ENCODE measurements at regions of chr5 and their contacts with region 1.

Region 1: DNA sequence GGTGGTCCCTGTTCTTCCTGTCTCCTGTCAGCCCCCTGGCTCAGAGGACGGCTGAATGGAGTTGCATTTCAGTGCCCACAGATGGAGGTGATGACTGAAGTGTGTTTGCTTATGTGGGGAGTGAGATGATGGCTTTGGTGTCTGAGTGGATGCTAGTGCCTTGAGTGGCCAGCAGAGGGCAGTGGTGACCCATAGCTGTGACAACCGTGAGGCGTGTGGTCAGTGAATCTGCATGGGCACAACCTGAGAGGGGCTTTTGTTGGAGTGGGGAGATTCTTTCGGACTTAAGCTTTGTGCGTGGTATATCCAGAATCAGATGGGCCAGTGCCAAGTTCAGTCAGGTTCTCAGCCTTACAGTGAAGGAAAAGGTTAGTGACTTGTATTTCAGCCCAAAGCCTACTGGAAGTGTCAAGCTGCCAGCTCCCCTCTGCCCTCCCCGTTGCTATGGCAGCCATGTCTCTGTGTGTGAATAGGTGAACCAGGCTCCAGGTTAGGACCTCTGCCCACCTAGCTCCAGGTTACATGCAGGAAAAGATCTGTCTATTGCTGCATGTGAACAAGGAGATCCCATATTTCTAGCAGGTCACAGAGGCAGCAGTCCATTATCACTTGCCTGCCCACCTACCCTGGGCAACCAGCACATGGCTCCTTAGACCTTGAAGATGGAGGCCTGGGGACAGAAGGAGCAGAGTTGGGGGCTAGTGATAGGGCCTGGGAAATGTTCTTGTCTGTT is 14.7 kb upstream of the CXXC5 start:
- DNase-seq: peak; percentile 87
- ATAC-seq: peak; percentile 14
- H3K4me3 ChIP-seq: no peak overlapping the region
- H3K4me3 Mint-ChIP-seq: peak overlapping the region; percentile 17
- H3K27ac ChIP-seq: peak overlapping the region; percentile 88 to 93
- H3K27ac Mint-ChIP-seq: peak overlapping the region; percentile 61
- H3K4me1 ChIP-seq: peaks cover 44 to 59% of the 10 kb centered on the region in 2 donors
- H3K4me1 Mint-ChIP-seq: peaks cover 54% of the 10 kb centered on the region
- H3K27me3 ChIP-seq: no peaks in the 10 kb centered on the region
- H3K27me3 Mint-ChIP-seq: no peaks in the 10 kb centered on the region
- CTCF ChIP-seq: peak; percentile 96

Region 2: GRCh38 chr5:139517683-139518564 is 115.5 kb before region 1 on chr5:
- CTCF ChIA-PET with region 1: interaction called, 5 read pairs
- POLR2A ChIA-PET with region 1: no interaction called
- intact Hi-C with region 1: loop called (anchors 5 kb)
- DNase-seq: peak; percentile 92
- ATAC-seq: peak; percentile 96
- H3K4me3 ChIP-seq: peak overlapping the region; percentile 41 to 68 (median 61)
- H3K4me3 Mint-ChIP-seq: peak overlapping the region; percentile 87
- H3K27ac ChIP-seq: peak overlapping the region; percentile 71 to 79
- H3K27ac Mint-ChIP-seq: peak overlapping the region; percentile 86
- H3K4me1 ChIP-seq: peaks cover 2 to 20% of the 10 kb centered on the region in 2 donors
- H3K4me1 Mint-ChIP-seq: peaks cover 23% of the 10 kb centered on the region
- H3K27me3 ChIP-seq: no peaks in the 10 kb centered on the region
- H3K27me3 Mint-ChIP-seq: no peaks in the 10 kb centered on the region
- CTCF ChIP-seq: peak; percentile 92

Region 3: GRCh38 chr5:139670369-139671095 is 37.1 kb after region 1 on chr5:
- CTCF ChIA-PET with region 1: interaction called, 215 read pairs
- POLR2A ChIA-PET with region 1: interaction called, 159 read pairs
- intact Hi-C with region 1: loop called (anchors 1 kb)
- DNase-seq: peak; percentile 89
- ATAC-seq: peak; percentile 69
- H3K4me3 ChIP-seq: peak overlapping the region in 4 of 5 experiments; percentile 40 to 71 (median 52)
- H3K4me3 Mint-ChIP-seq: peak overlapping the region; percentile 86
- H3K27ac ChIP-seq: peak overlapping the region; percentile 89 to 90
- H3K27ac Mint-ChIP-seq: peak overlapping the region; percentile 95
- H3K4me1 ChIP-seq: peaks cover 88 to 98% of the 10 kb centered on the region in 2 donors
- H3K4me1 Mint-ChIP-seq: peaks cover 88% of the 10 kb centered on the region
- H3K27me3 ChIP-seq: no peaks in the 10 kb centered on the region
- H3K27me3 Mint-ChIP-seq: no peaks in the 10 kb centered on the region
- CTCF ChIP-seq: peak; percentile 47

Region 4: DNA sequence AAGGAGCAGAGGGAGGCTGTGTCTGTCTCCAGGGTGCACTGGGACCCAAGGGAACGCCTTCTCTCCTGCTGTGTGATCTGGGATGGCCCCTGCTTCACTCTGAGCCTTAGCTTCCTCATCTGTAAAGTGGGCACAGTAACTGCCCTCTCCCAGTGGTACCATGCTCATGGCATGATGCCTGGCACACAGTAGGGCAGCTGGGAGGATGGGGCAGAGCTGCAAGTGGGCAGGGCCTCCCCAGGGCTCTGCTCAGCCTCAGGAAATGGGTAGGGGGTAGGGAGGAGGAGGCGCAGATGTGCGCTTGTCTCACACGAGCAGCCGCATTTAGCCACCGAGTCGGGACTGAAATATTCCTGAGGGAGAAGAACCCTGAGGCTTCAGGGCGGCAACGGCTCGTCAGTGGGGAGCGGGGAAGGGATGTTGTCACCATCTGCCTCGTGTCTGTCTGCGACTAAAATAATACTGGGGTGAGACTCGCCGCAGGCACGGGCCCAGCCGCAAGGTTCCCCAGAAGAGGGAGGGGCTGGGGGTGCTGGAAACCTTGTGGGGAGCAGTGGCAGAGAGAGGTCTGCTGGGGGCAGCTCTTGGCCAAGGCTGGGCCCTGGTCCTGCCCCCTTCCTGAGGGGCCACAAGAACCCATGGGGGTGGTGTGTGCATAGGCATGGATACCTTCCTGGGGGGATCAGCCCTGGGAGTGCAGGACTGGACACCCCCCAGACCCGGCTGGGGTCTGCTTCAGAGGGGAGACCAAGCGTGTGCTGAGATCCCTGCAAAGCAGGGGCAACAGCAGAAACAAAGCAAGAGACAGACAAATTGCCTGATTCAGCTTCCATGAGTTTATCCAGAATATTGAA is 106.9 kb after region 1 on chr5:
- CTCF ChIA-PET with region 1: interaction called, 73 read pairs
- POLR2A ChIA-PET with region 1: interaction called, 81 read pairs
- intact Hi-C with region 1: no loop called
- DNase-seq: peak; percentile 65
- ATAC-seq: peak; percentile 32
- H3K4me3 ChIP-seq: peak overlapping the region in 3 of 5 experiments; percentile 1 to 48 (median 18)
- H3K4me3 Mint-ChIP-seq: peak overlapping the region; percentile 62
- H3K27ac ChIP-seq: peak overlapping the region in 1 of 2 donors; percentile 17
- H3K27ac Mint-ChIP-seq: peak overlapping the region; percentile 88
- H3K4me1 ChIP-seq: peaks cover 27 to 44% of the 10 kb centered on the region in 2 donors
- H3K4me1 Mint-ChIP-seq: peaks cover 59% of the 10 kb centered on the region
- H3K27me3 ChIP-seq: no peaks in the 10 kb centered on the region
- H3K27me3 Mint-ChIP-seq: no peaks in the 10 kb centered on the region
- CTCF ChIP-seq: no peak

Region 5: DNA sequence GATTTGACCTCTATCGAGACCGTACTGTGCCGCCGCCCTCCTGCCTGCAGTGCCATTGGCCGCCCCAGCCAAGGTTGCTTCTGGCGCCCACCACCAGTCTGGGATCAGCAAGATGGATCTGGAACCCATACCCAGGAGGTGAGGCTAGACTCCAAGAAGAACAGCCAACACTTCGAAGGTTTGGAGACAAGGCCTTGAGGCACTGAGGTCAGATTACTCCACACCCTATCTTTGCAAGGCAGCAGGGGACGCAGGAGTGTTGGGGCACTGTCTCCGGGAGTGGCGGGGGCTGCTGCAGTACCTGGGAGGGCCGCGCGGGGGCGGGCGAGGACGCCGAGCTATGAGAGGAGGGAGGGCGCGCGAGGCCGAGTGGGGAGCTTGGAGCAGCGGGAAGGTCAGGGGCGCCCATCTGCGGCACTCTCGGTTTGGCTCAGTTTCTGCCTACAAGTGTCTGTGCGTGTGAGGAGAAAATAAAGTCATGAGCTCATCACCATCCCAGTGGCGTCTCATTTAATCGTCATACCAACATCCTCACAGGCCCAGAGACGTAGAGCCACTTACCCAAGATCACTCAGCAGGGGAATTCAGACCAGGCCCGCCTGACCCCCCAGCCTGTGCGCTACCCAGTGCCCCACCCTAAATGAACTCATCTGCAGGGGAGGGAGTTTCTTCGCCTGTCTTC is 141.7 kb after region 1 on chr5:
- CTCF ChIA-PET with region 1: interaction called, 479 read pairs
- POLR2A ChIA-PET with region 1: no interaction called
- intact Hi-C with region 1: no loop called
- DNase-seq: peak; percentile 84
- ATAC-seq: peak; percentile 98
- H3K4me3 ChIP-seq: peak overlapping the region in 3 of 5 experiments; percentile 1 to 26 (median 6)
- H3K4me3 Mint-ChIP-seq: peak overlapping the region; percentile 64
- H3K27ac ChIP-seq: no peak overlapping the region
- H3K27ac Mint-ChIP-seq: peak overlapping the region; percentile 41
- H3K4me1 ChIP-seq: peaks cover 7 to 13% of the 10 kb centered on the region in 2 donors
- H3K4me1 Mint-ChIP-seq: peaks cover 15% of the 10 kb centered on the region
- H3K27me3 ChIP-seq: peaks cover 0 to 5% (median 0%) of the 10 kb centered on the region in 4 experiments
- H3K27me3 Mint-ChIP-seq: peaks cover 14% of the 10 kb centered on the region
- CTCF ChIP-seq: peak; percentile 94

Region 6: GRCh38 chr5:139968547-139969261 is 335.2 kb after region 1 on chr5:
- CTCF ChIA-PET with region 1: interaction called, 9 read pairs
- POLR2A ChIA-PET with region 1: no interaction called
- intact Hi-C with region 1: loop called (anchors 5 kb)
- DNase-seq: peak; percentile 89
- ATAC-seq: peak; percentile 99
- H3K4me3 ChIP-seq: no peak overlapping the region
- H3K4me3 Mint-ChIP-seq: no peak overlapping the region
- H3K27ac ChIP-seq: no peak overlapping the region
- H3K27ac Mint-ChIP-seq: no peak overlapping the region
- H3K4me1 ChIP-seq: no peaks in the 10 kb centered on the region
- H3K4me1 Mint-ChIP-seq: no peaks in the 10 kb centered on the region
- H3K27me3 ChIP-seq: peaks cover 0 to 25% (median 8%) of the 10 kb centered on the region in 4 experiments
- H3K27me3 Mint-ChIP-seq: peaks cover 44% of the 10 kb centered on the region
- CTCF ChIP-seq: peak; percentile 100